ENCODE measurements at regions of chr5 and their contacts with region 1.

Region 1: GRCh38 chr5:177425801-177426565 is 493 bp upstream of the GRK6 start:
- DNase-seq: peak; percentile 100
- ATAC-seq: peak; percentile 77
- H3K4me3 Mint-ChIP-seq: peak overlapping the region; percentile 81
- H3K27ac Mint-ChIP-seq: peak overlapping the region; percentile 94
- H3K4me1 Mint-ChIP-seq: peaks cover 36% of the 10 kb centered on the region
- H3K27me3 Mint-ChIP-seq: no peaks in the 10 kb centered on the region

Region 2: DNA sequence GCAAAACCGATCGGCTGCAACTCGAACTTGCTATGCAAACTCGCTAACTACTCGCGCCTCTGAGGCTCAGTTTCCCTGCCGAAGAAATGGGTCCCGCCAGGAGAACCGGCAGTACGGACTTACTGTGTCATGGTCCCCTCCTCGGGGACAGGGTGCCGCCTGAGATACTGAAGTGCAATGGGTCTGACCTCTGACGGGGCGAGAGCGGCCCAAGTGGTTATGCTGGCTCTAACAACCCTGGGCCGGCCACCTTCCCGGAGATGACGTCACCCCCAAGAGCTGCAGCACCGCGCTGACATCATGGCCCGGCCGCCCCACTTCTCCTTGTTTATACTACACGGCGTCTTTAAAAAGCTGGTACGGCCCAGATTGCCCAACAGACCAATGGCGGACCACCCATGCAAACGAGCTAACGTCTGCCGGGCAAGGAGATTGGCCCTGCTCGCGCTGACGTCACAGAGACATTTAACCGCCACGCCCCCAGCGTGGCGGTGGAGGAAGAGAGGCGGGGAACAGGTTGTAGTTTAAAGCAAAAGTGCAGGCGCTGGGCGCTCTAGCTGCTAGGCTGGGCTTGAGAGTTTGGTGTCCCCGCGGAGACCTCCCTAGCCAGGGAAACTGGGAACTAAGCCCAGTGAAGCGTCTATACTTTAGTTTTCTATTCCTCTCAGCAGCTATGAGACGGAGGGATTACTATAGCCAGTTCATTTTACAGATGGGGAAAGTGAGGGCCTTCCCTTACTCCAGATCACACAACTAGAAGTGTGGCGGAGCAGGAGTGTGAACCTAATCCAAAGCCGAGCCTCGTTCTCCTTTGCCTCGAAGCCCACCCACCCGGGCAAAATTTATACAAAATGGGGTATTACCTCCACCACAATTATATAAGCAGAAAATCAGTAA is 888.1 kb before region 1 on chr5:
- CTCF ChIA-PET with region 1: no interaction called
- POLR2A ChIA-PET with region 1: no interaction called
- intact Hi-C with region 1: loop called in 1 of 2 experiments (anchors 2 kb)
- DNase-seq: peak; percentile 99
- ATAC-seq: peak; percentile 75
- H3K4me3 Mint-ChIP-seq: peak overlapping the region; percentile 97
- H3K27ac Mint-ChIP-seq: peak overlapping the region; percentile 97
- H3K4me1 Mint-ChIP-seq: peaks cover 66% of the 10 kb centered on the region
- H3K27me3 Mint-ChIP-seq: no peaks in the 10 kb centered on the region

Region 3: DNA sequence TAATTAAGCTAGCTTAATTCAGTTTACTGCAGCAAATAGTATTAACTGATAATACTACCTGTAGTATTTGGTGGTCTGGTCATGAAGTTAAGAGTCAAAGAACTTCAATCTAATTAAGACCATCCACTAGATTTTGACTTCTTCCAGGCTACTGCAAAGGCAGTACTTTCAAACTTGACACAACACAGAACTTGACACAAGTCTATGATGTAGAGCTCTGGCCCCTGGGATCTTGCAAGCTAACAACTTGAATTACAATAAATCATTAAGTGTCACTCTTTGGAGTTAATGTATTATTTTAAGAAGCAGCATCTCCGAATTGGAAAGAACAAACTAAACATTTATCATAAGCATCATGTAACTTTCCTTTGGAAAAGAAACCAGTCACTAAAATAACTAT is 460.4 kb before region 1 on chr5:
- CTCF ChIA-PET with region 1: no interaction called
- POLR2A ChIA-PET with region 1: no interaction called
- intact Hi-C with region 1: no loop called
- DNase-seq: no peak
- ATAC-seq: no peak
- H3K4me3 Mint-ChIP-seq: no peak overlapping the region
- H3K27ac Mint-ChIP-seq: no peak overlapping the region
- H3K4me1 Mint-ChIP-seq: no peaks in the 10 kb centered on the region
- H3K27me3 Mint-ChIP-seq: no peaks in the 10 kb centered on the region

Region 4: DNA sequence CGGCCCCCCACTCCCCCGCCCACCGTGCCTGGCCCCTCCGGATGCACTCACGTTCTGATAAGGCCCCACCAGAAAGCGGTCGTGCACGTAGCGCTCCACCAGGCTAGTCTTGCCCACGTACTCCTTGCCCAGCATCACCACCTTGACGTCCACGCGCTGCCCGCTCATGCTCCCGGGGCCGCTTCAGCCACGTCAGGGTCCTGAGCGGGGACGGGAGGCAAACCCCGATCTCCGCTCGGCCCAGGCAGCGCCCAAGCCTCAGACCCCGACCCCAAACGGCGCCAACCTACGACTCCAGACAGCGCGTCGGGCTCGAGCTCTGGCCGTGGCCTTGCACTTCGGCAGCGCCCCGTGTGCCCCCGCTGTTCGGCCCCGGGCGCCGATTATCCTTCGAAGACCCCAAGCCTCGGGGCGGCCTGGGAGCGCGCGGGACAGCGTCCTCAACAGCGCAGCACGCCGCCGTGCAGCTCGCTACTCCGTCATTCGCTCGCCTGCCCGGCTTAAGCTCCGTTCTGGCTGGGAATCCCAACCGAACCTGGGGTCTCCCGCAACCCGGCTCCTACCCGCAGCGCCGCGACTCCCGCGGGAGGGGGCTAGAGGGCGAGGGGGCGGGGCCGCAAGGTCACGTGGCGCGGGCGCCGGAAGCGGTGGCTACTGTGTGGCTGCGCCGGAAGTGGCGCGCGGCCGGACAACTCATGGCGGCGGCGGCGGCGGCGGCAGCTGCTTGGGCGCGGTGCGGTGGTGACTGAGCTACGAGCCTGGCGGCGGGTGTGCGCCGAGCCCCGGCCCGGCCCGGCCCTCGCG is 122.7 kb before region 1 on chr5 and contains the starts of genes PRELID1 and RAB24:
- CTCF ChIA-PET with region 1: interaction called, 3 read pairs
- POLR2A ChIA-PET with region 1: no interaction called
- intact Hi-C with region 1: loop called in 1 of 2 experiments (anchors 2 kb)
- DNase-seq: peak; percentile 95
- ATAC-seq: peak; percentile 69
- H3K4me3 Mint-ChIP-seq: peak within 1 kb of the TSS; percentile 93
- H3K27ac Mint-ChIP-seq: peak within 1 kb of the TSS; percentile 90
- H3K4me1 Mint-ChIP-seq: peaks cover 59% of the 10 kb centered on the region
- H3K27me3 Mint-ChIP-seq: no peaks in the 10 kb centered on the region
- total RNA-seq, gene PRELID1: 266 to 362 TPM
- total RNA-seq, gene RAB24: 10.9 to 21.0 TPM

Region 5: DNA sequence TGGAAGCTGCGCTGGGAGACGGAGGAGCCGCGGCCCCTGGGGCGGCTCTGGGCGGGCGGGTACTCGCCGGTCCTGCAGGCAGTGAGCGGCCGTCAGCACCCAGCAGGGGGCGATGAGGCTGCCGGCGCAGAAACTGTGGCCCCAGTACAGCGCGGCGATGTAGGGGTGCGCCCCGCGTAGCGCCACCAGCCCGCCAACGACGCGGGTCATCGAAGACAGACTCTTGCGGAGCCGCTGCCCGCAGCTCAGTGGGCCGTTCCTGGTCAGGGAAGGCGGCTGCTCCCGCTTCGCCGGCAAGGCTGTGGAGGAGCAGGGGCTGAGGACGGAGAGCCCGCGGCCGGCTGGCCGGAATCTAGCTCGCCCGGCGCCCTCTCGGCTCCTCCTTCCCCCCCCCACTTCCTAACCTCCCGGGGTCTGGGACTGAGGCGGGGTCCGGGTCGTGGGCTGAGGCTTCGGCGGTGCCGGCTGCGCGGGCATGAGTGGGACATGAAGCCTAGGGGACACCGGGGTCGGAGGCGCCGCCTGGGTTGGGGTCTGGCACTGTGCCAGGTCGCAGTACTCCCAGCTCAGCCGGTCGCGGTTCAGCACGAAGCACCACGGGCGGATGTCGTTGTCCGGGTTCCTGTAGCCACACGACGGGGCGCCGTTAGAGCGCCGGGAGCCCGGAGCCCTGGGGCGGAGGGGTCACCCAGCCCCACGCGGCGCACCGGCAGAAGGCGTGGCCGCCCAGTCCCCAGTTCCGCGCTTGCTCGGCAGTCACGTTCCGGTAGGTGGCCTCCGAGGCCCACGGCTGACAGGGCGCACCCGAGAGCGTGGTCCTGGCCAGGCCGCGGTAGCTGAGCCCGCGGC is 22.0 kb before region 1 on chr5:
- CTCF ChIA-PET with region 1: interaction called, 81 read pairs
- POLR2A ChIA-PET with region 1: interaction called, 17 read pairs
- intact Hi-C with region 1: loop called (anchors 1 kb)
- DNase-seq: peak; percentile 91
- ATAC-seq: peak; percentile 84
- H3K4me3 Mint-ChIP-seq: peak overlapping the region; percentile 72
- H3K27ac Mint-ChIP-seq: peak overlapping the region; percentile 42
- H3K4me1 Mint-ChIP-seq: peaks cover 27% of the 10 kb centered on the region
- H3K27me3 Mint-ChIP-seq: peaks cover 14% of the 10 kb centered on the region

Region 6: DNA sequence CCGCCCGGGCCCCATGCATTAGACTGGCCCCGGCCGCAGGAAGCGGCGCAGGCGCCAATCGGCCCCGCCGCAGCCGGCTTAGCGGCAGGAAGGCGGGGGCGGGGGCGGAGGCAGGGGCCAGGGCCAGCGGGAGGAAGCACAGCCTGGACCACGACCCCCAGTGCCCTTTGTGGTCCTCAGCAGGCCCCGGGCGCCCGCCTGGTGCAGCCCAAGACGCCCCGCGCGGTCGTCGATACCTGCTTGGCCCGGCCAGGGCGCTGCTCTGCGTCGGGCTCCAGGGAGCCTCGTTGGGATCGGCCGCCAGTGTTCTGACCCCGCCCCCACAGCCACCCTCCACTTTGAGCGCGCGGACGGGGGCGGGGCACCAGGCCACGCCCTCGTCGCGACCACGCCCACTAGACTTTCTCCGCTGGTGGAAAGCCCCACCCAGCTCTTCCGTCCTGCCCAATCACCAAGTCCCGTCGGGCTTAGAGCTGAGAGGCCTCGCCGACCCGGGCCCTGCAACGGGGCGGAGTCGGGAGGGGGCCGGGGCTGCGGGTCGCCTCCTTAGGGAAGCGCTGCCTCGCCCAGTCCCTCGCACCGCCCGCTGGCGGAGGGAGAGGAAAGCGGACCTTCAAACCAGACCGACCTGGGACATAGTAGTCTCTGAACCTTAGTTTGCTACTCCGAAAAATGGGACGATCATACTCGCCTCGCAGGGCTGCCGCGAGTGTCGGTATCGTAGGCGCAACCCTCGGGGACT is 71.5 kb after region 1 on chr5 and contains the start of gene PDLIM7:
- CTCF ChIA-PET with region 1: interaction called, 9 read pairs
- POLR2A ChIA-PET with region 1: interaction called, 6 read pairs
- intact Hi-C with region 1: loop called (anchors 1 kb)
- DNase-seq: peak; percentile 98
- ATAC-seq: peak; percentile 86
- H3K4me3 Mint-ChIP-seq: peak within 1 kb of the TSS; percentile 73
- H3K27ac Mint-ChIP-seq: peak within 1 kb of the TSS; percentile 37
- H3K4me1 Mint-ChIP-seq: peaks cover 31% of the 10 kb centered on the region
- H3K27me3 Mint-ChIP-seq: peaks cover 12% of the 10 kb centered on the region
- total RNA-seq, gene PDLIM7: 41.9 to 50.2 TPM

Region 7: DNA sequence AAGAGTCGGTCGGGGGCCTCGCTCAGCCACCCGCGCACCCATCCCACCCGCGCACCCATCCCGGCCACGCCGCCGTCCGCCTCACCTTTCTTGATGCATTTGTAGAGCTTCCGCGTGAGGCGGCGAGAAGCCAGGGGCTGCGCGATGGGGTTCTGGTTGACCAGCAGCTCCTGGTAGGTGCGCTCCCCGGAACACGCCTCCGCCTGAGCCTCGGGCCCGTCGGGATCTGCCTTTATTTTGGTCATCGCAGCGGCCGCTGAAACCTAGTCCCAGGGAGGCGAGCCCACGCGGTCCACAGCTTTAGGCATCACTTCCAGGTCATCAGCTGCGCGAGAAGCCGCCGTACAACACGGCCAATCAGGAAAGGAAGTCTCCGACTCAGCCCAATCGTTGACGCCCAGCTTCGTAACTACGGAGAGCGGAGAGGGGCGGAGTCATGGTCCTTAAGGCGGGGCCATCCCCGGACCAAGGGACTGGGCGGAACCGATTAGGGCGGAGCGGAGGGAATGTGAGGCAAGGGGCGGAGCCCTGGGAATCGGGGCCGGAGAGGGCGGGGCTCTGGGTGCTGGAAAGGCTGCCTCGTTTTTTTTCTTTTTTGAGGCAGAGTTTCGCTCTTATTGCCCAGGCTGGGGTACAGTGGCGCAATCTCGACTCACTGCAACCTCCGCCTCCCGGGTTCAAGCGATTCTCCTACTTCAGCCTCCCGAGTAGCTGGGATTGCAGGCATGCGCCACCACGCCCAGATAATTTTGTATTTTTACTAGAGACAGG is 727.8 kb after region 1 on chr5 and contains the start of gene NHP2:
- CTCF ChIA-PET with region 1: no interaction called
- POLR2A ChIA-PET with region 1: no interaction called
- intact Hi-C with region 1: loop called in 1 of 2 experiments (anchors 5 kb)
- DNase-seq: peak; percentile 99
- ATAC-seq: peak; percentile 99
- H3K4me3 Mint-ChIP-seq: peak within 1 kb of the TSS; percentile 97
- H3K27ac Mint-ChIP-seq: peak within 1 kb of the TSS; percentile 86
- H3K4me1 Mint-ChIP-seq: peaks cover 46% of the 10 kb centered on the region
- H3K27me3 Mint-ChIP-seq: no peaks in the 10 kb centered on the region
- total RNA-seq, gene NHP2: 244 TPM